Vagina (tissue), 2 donors: ENCODE measurements at regions of chr12 and their contacts with region 1.

Region 1: GRCh38 chr12:3261782-3262359 is 184.7 kb downstream of the TSPAN9 start:
- DNase-seq: no peak
- H3K4me3 ChIP-seq: no peak overlapping the region
- H3K27ac ChIP-seq: no peak overlapping the region
- H3K4me1 ChIP-seq: peaks cover 11% of the 10 kb centered on the region
- H3K27me3 ChIP-seq: no peaks in the 10 kb centered on the region
- CTCF ChIP-seq: no peak
- POLR2A ChIP-seq: no peak

Region 2: DNA sequence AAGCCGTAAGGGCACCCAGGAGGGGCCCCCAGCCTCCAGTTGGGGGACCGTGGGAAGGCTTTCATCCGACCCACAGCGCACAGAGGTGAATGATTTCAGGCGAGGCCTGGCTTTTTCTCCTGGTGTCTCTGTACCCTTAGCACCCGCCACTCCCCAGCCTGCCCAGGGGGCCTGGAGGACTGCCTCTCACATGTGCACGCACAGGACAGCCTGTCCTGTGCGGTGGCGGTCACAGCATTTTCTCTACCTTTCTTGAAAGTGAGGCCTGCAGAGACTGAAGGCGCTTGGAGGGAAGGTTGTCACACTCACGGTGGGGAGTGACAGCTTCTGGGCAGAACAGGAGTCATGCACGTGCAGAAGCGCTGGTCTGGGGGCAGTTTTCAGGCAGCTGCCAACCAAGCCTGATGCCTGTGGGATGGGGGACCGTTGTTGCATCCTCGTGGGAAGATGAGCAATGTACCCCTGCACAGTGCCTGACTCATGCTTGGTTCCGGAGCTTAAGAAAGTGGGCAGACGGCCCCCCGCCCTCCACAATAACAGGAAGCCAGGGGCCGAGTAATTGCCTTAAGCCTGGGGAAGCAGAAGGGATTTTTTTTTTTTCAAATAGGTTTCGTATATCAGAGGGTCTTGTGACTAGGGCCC is 36.6 kb before region 1 on chr12:
- intact Hi-C with region 1: loop called (anchors 5 kb)
- DNase-seq: no peak
- H3K4me3 ChIP-seq: no peak overlapping the region
- H3K27ac ChIP-seq: no peak overlapping the region
- H3K4me1 ChIP-seq: peaks cover 8% of the 10 kb centered on the region
- H3K27me3 ChIP-seq: no peaks in the 10 kb centered on the region
- CTCF ChIP-seq: no peak
- POLR2A ChIP-seq: no peak